B cell (primary cell): ENCODE measurements at regions of chr19 and their contacts with region 1.

Region 1: DNA sequence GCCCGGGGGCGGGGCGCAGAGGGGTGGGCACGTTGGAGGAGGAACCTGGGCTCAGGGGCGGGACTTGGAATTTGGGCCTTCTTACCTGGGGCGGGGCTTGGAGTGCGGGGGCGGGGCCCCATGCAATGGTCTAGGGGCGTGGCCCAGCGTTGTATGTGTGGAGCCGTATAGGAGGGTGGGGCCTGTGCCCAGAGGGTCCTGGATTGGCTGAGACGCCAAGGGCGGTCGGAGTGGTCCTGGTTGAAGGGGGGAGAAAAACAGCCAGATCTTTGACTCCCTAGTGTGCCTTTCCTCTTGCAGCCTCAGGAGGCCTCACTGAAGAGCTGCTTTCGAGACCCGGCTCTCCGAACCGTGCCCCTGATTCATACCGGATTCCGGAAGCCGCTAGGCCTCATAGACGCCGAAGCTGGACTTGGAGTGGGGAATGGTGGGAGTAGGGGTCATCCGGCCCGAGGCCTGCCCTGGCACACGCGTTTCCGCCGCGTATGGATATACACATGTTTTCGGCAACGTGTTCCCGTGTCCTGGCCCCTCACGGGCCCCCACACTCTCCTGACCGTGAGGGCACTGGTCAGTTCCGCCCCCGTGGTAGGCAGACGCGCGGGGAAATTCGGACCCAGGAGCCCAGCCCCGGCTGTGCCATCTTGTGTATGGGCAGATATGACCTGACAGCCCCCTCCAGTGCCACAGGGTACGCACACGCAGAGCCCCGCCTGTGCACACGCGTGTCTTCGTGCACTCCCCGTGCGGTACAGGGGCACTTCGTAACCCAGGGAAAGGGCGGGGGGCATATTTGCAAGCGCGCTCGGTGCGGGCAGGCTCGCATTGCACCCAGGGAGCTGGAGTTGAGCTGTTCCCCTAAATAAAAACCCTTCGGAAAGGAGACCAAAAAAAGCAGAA is 661 bp upstream of the PRR12 start:
- DNase-seq: peak; percentile 97
- ATAC-seq: peak; percentile 80
- H3K4me3 ChIP-seq: peak overlapping the region; percentile 69 to 85 (median 77)
- H3K4me3 Mint-ChIP-seq: peak overlapping the region; percentile 84
- H3K27ac ChIP-seq: peak overlapping the region; percentile 72 to 85
- H3K27ac Mint-ChIP-seq: peak overlapping the region; percentile 91
- H3K4me1 ChIP-seq: peaks cover 16 to 26% of the 10 kb centered on the region in 2 donors
- H3K4me1 Mint-ChIP-seq: peaks cover 27% of the 10 kb centered on the region
- H3K27me3 ChIP-seq: no peaks in the 10 kb centered on the region
- H3K27me3 Mint-ChIP-seq: no peaks in the 10 kb centered on the region
- CTCF ChIP-seq: peak; percentile 13

Region 2: GRCh38 chr19:49487277-49488045 is 102.9 kb before region 1 on chr19 and contains the start of gene RPL13A:
- CTCF ChIA-PET with region 1: no interaction called
- POLR2A ChIA-PET with region 1: interaction called, 13 read pairs
- intact Hi-C with region 1: no loop called
- DNase-seq: peak; percentile 100
- ATAC-seq: peak; percentile 93
- H3K4me3 ChIP-seq: peak within 1 kb of the TSS; percentile 92 to 100 (median 97)
- H3K4me3 Mint-ChIP-seq: peak within 1 kb of the TSS; percentile 99
- H3K27ac ChIP-seq: peak within 1 kb of the TSS; percentile 91 to 97
- H3K27ac Mint-ChIP-seq: peak within 1 kb of the TSS; percentile 97
- H3K4me1 ChIP-seq: peaks cover 17 to 36% of the 10 kb centered on the region in 2 donors
- H3K4me1 Mint-ChIP-seq: peaks cover 42% of the 10 kb centered on the region
- H3K27me3 ChIP-seq: no peaks in the 10 kb centered on the region
- H3K27me3 Mint-ChIP-seq: no peaks in the 10 kb centered on the region
- CTCF ChIP-seq: no peak
- total RNA-seq, gene RPL13A: 5,221 and 5,457 TPM in 2 replicates

Region 3: DNA sequence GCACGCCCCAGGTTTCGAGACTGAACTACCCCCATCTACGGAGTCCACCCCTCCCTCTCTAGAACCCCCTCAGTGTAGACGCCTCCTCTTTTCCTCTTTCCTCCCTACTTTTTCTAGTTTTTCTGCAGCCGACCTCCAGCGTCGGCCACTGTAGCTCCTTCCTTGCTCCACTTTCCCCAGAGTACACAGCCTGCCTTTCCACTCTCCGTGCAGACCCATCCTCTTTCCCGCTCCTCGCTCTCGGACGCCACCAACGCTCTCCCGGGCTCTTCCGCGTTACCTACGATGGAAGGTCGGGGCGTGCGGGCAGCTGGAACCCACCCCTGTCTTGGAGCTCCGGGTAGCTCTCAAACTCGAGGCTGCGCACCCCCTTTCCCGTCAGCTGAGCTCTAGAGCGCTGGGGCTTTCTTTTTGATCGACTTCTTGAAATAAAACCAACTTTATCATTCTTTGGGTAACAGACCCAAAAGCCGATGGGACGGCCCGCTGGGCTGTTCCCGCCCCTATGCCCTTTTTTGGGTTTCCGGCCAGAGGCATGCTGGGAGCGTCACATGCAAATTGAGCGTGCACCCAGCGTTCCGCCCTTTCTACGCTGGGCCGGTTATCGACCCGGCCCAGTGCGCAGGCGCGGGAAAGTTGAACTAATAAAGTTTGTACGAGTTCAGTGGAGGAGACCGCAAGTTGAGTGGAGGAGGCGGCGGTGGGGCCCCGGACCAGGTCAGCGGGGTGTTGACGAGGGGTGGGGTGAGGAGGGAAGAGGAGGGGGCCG is 75.2 kb after region 1 on chr19 and contains the starts of genes BCL2L12 and IRF3:
- CTCF ChIA-PET with region 1: no interaction called
- POLR2A ChIA-PET with region 1: interaction called, 8 read pairs
- intact Hi-C with region 1: loop called (anchors 1 kb)
- DNase-seq: peak; percentile 98
- ATAC-seq: peak; percentile 83
- H3K4me3 ChIP-seq: peak within 1 kb of the TSS; percentile 71 to 99 (median 94)
- H3K4me3 Mint-ChIP-seq: peak within 1 kb of the TSS; percentile 95
- H3K27ac ChIP-seq: peak within 1 kb of the TSS; percentile 62 to 73
- H3K27ac Mint-ChIP-seq: peak within 1 kb of the TSS; percentile 94
- H3K4me1 ChIP-seq: peaks cover 16 to 30% of the 10 kb centered on the region in 2 donors
- H3K4me1 Mint-ChIP-seq: peaks cover 37% of the 10 kb centered on the region
- H3K27me3 ChIP-seq: no peaks in the 10 kb centered on the region
- H3K27me3 Mint-ChIP-seq: no peaks in the 10 kb centered on the region
- CTCF ChIP-seq: no peak
- total RNA-seq, gene BCL2L12: 17.3 and 22.1 TPM in 2 replicates
- total RNA-seq, gene IRF3: 233 and 251 TPM in 2 replicates